HCT116 (cell line): ENCODE measurements at regions of chr20 and their contacts with region 1.

Region 1: DNA sequence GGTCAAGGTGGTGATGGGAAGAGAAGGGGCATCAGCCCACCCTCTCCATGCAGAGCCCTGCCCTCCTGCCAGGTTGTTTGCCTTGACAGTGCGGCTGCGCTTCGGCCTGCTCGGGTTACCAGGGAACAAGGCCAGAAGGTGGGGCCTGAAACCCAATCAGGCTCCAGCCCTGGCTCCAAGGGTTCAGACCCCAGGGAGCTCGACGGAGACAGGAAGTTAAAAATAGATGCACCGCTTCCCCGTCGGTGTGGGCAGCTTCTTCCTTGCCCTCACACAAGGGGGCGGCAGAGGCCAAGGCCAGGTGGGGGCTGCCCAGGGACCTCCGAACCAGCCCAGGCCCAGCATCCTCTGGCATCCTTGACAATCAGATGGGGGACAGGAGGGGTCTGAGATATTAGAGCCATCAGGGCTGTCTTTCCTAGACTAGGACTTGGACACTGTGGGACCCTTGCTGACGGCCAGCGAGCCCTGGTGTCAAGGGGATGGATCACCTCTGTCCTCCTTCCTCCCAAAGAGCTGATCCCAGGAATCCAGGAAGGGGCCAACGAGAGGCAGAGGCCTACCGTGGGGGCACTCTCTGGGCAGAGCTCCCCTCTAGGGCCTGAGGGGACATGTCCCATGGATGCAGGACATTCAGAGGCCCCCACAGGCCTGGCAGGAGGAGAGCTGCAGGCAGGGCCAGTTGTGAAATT is 65.2 kb downstream of the RIPOR3 start:
- DNase-seq: peak; percentile 36
- ATAC-seq: peak; percentile 91
- H3K4me3 ChIP-seq: 0 out of 4 replicates have a peak overlapping the region, but pooled peaks of 1 of the 2 experiments have one; percentile 7
- H3K27ac ChIP-seq: no peak overlapping the region
- H3K4me1 ChIP-seq: peaks cover 6 to 20% of the 10 kb centered on the region in 2 experiments; a peak in 3 of 4 replicates
- H3K27me3 ChIP-seq: no peaks in the 10 kb centered on the region
- CTCF ChIP-seq: peak; percentile 83 to 90 (median 85)
- POLR2A ChIP-seq: no peak
- RAD21 ChIP-seq: peak; percentile 98

Region 2: DNA sequence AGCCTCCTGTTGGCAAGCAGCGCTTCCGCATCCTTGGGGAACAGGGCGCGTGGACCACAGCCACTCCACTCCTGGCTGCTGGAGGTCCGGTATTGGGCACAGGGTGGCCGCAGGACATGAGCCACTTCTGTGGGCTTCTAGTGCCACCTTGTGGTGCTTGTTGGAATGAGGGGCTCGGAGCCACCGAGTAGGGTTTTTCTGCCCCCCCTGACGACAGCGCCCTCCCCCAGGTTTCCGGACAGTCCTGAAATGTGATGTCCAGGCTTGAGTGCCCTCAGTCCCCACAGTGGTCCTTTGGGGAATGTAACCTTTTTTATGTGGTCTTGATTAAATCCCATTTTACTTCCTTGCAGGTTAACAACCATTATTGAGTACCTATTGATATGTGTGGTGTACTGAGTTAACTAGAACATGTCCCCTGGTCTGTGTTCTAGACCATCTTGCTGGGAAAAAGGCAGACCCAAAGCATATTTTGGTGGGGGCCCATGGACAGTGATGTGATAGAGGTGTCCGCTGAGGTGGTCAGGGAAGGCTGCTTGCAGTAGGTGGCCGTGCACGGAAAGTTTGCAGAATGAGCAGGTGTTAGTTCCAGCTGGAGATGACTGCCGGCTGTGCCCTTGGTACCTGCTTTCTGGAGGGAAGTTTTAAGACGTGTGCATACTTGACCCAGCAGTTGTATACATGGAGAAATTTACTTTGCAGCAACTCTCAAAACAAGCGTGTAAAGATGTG is 46.0 kb before region 1 on chr20:
- CTCF ChIA-PET with region 1: no interaction called
- POLR2A ChIA-PET with region 1: no interaction called
- RAD21 ChIA-PET with region 1: no interaction called
- intact Hi-C with region 1: no loop called
- DNase-seq: peak; percentile 42
- ATAC-seq: peak; percentile 79
- H3K4me3 ChIP-seq: no peak overlapping the region
- H3K27ac ChIP-seq: no peak overlapping the region
- H3K4me1 ChIP-seq: peaks cover 2 to 7% of the 10 kb centered on the region in 2 experiments; a peak in 2 of 4 replicates
- H3K27me3 ChIP-seq: no peaks in the 10 kb centered on the region
- CTCF ChIP-seq: peak; percentile 70 to 87 (median 80)
- POLR2A ChIP-seq: no peak
- RAD21 ChIP-seq: peak; percentile 86

Region 3: DNA sequence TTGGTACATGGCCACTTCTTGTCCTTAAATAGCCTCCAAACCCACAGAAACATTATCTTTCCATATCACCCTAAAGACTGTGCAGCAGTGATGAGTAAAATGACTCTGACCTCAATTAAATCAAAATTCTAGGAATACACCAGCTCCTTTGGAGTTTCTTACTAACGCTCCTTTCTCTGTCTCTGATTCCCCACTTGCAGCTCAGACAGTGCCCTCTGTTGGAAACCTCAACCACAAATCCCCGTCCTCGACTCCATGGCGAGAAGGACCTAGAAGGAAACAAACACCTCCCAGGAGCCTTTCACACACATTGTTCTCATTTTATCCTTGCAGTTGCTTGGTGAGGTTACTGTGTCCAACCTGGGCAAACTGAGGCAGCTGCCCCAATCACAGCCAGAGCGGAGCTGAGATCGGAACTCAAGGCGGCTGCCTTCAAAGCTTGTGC is 87.5 kb after region 1 on chr20:
- CTCF ChIA-PET with region 1: interaction called, 10 read pairs
- POLR2A ChIA-PET with region 1: no interaction called
- RAD21 ChIA-PET with region 1: interaction called in 1 of 2 experiments, 5 read pairs
- intact Hi-C with region 1: no loop called
- DNase-seq: no peak
- ATAC-seq: peak; percentile 57
- H3K4me3 ChIP-seq: no peak overlapping the region
- H3K27ac ChIP-seq: no peak overlapping the region
- H3K4me1 ChIP-seq: peaks cover 18 to 43% of the 10 kb centered on the region in 2 experiments; a peak in 3 of 4 replicates
- H3K27me3 ChIP-seq: no peaks in the 10 kb centered on the region
- CTCF ChIP-seq: peak; percentile 27 to 51 (median 43); a peak in 5 of 6 replicates
- POLR2A ChIP-seq: no peak
- RAD21 ChIP-seq: peak; percentile 62